ENCODE measurements at regions of chr6 and their contacts with region 1.

Region 1: GRCh38 chr6:149359440-149359839 is 40.6 kb upstream of the SUMO4 start:
- DNase-seq: peak in 1 of 3 donors; percentile 26
- H3K4me3 ChIP-seq: no peak overlapping the region
- H3K27ac ChIP-seq: no peak overlapping the region
- H3K4me1 ChIP-seq: peaks cover 0 to 26% (median 6%) of the 10 kb centered on the region in 4 experiments
- H3K27me3 ChIP-seq: no peaks in the 10 kb centered on the region

Region 2: GRCh38 chr6:149347067-149347466 is 12.4 kb before region 1 on chr6:
- CTCF ChIA-PET with region 1: interaction called, 10 read pairs
- POLR2A ChIA-PET with region 1: no interaction called
- DNase-seq: peak in 2 of 3 donors; percentile 54 to 75
- H3K4me3 ChIP-seq: peak overlapping the region in 1 of 7 experiments; percentile 26
- H3K27ac ChIP-seq: no peak overlapping the region
- H3K4me1 ChIP-seq: peaks cover 14 to 50% (median 18%) of the 10 kb centered on the region in 4 experiments
- H3K27me3 ChIP-seq: no peaks in the 10 kb centered on the region

Measured in common myeloid progenitor, CD34-positive (primary cell).